ENCODE measurements at regions of chr11 and their contacts with region 1.

Region 1: GRCh38 chr11:113234888-113235287 is 79.5 kb upstream of the TTC12 start:
- DNase-seq: no peak
- H3K4me3 ChIP-seq: no peak overlapping the region
- H3K27ac ChIP-seq: no peak overlapping the region
- H3K4me1 ChIP-seq: no peaks in the 10 kb centered on the region
- H3K27me3 ChIP-seq: peaks cover 6% of the 10 kb centered on the region
- CTCF ChIP-seq: no peak

Region 2: DNA sequence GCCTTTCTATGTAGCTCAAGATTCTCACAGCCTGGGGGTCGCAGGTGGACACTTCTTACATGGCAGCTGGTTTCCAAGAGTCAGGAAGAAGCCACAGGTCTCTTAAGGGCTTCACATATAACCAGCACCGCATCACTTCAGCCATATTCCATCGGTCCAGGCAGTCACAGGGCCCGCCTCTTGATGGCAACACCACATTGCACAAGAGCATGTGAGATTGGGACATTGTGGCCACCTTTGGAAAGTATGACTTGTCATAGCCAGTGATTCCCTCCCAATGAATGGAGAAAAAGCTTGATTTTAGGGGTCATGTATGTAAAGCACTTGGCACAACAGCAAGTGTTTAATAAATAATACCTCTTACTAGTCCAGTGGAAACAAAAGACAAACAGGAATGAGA is 175.3 kb before region 1 on chr11:
- CTCF ChIA-PET with region 1: no interaction called
- POLR2A ChIA-PET with region 1: no interaction called
- intact Hi-C with region 1: no loop called
- DNase-seq: no peak
- H3K4me3 ChIP-seq: no peak overlapping the region
- H3K27ac ChIP-seq: no peak overlapping the region
- H3K4me1 ChIP-seq: no peaks in the 10 kb centered on the region
- H3K27me3 ChIP-seq: no peaks in the 10 kb centered on the region
- CTCF ChIP-seq: no peak

Region 3: DNA sequence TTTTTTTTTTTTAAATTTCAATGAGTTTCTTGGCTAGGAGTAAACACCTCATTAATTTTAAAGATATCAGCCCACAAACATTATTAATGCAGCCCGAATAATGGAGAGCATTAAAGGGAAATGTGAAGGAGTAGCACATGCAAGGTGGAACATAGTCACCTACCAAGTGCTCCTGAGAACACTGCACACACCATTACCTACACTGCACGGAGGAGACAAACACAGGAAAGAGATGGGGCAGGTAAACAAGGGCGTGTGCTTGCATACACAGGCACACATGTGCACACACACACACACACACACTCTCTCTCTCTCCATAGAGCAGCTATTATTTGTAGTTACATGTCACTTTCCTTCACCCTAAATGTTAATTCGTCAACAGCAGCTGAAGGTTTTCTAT is 699.9 kb after region 1 on chr11:
- CTCF ChIA-PET with region 1: no interaction called
- POLR2A ChIA-PET with region 1: interaction called, 10 read pairs
- intact Hi-C with region 1: no loop called
- DNase-seq: no peak
- H3K4me3 ChIP-seq: no peak overlapping the region
- H3K27ac ChIP-seq: no peak overlapping the region
- H3K4me1 ChIP-seq: no peaks in the 10 kb centered on the region
- H3K27me3 ChIP-seq: peaks cover 16% of the 10 kb centered on the region
- CTCF ChIP-seq: no peak